ENCODE measurements at regions of chr3 and their contacts with region 1.

Region 1: GRCh38 chr3:61688307-61688984 is 127.1 kb downstream of the PTPRG start:
- DNase-seq: peak; percentile 84 to 94
- H3K4me3 ChIP-seq: peak overlapping the region in 2 of 4 experiments; percentile 6 to 19; a peak in 3 of 8 replicates
- H3K27ac ChIP-seq: no peak overlapping the region; the same call in 1 of the 2 replicates
- H3K4me1 ChIP-seq: peaks cover 23 to 66% (median 56%) of the 10 kb centered on the region in 4 experiments
- H3K27me3 ChIP-seq: peaks cover 0 to 4% (median 0%) of the 10 kb centered on the region in 4 experiments; a peak in 1 of 7 replicates
- CTCF ChIP-seq: no peak
- EP300 ChIP-seq: peak in 1 of 2 experiments; percentile 51; a peak in 1 of 3 replicates
- POLR2A ChIP-seq: no peak
- RAD21 ChIP-seq: peak; percentile 26 to 37; a peak in 3 of 4 replicates

Region 2: GRCh38 chr3:61704807-61705206 is 16.4 kb after region 1 on chr3:
- CTCF ChIA-PET with region 1: interaction called, 4 read pairs
- POLR2A ChIA-PET with region 1: interaction called, 42 read pairs
- DNase-seq: no peak
- H3K4me3 ChIP-seq: peak overlapping the region in 1 of 4 experiments; percentile 15; a peak in 1 of 8 replicates
- H3K27ac ChIP-seq: peak overlapping the region; percentile 57; the same call in 1 of the 2 replicates
- H3K4me1 ChIP-seq: peaks cover 19 to 56% (median 51%) of the 10 kb centered on the region in 4 experiments
- H3K27me3 ChIP-seq: no peaks in the 10 kb centered on the region
- CTCF ChIP-seq: no peak
- EP300 ChIP-seq: no peak
- POLR2A ChIP-seq: no peak
- RAD21 ChIP-seq: no peak